ENCODE measurements at regions of chr15 and their contacts with region 1.

Region 1: DNA sequence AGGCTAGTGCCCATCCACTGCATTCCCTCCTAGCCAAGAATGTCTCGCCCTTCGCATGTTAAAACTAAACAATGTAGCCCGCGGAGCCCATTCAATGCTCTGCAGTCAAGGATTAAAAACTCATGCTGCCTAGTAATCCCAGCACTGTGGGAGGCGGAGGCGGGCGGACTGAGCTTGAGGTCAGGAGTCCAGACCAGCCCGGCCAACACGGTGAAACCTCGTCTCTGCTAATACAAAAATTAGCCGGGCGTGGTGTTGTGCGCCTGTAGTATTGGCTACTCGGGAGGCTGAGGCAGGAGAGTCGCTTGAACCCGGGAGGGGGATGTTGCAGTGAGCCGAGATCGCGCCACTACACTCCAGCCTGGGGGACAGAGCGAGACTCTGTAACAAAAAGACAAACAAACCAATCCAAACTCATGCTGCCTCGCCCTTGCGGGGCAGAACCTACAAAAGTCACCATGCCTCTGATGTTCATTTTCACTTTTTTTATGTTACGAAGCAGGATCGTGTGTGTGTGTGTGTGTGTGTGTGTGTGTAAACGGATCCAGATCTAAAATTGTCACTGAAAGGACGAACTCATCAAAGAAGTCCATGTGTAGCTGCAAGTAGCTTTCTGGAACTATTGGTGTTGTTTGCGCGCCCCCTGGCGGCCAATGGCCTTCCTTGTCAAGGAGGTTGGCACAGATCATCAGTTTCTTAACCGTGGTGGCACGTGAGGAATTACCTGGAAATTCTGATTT is 54.8 kb upstream of the SPESP1 start:
- DNase-seq: peak; percentile 56
- H3K4me3 ChIP-seq: peak overlapping the region; percentile 56
- CTCF ChIP-seq: peak; percentile 87

Region 2: GRCh38 chr15:68304589-68305337 is 570.8 kb before region 1 on chr15:
- CTCF ChIA-PET with region 1: interaction called, 11 read pairs
- POLR2A ChIA-PET with region 1: no interaction called
- DNase-seq: no peak
- H3K4me3 ChIP-seq: no peak overlapping the region
- CTCF ChIP-seq: no peak

Region 3: GRCh38 chr15:68559345-68560310 is 315.9 kb before region 1 on chr15:
- CTCF ChIA-PET with region 1: interaction called, 94 read pairs
- POLR2A ChIA-PET with region 1: no interaction called
- DNase-seq: no peak
- H3K4me3 ChIP-seq: peak overlapping the region; percentile 59
- CTCF ChIP-seq: peak; percentile 98

Region 4: DNA sequence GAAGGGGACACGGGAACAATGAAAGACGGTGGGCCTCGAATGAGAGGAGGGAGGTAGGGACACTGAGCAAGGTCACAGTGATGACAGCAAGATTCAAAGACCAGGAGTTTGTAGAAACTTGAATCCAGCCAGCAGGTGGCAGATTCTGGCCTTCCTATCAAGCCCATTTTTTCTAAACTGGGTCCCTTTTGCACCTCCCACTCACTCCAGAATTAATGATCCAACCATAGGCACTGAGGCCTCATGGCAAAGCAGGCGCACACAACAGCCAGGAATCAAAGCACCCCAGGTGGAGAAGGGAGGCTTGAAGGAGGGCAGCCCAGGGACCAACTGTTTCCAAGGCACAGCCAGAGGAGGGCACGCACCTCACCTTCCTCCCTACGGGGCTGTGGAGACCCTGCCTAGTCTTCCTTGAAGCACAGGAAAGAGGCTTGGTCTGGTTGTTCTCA is 145.1 kb before region 1 on chr15:
- CTCF ChIA-PET with region 1: interaction called, 35 read pairs
- POLR2A ChIA-PET with region 1: no interaction called
- DNase-seq: no peak
- H3K4me3 ChIP-seq: no peak overlapping the region
- CTCF ChIP-seq: peak; percentile 44

Region 5: DNA sequence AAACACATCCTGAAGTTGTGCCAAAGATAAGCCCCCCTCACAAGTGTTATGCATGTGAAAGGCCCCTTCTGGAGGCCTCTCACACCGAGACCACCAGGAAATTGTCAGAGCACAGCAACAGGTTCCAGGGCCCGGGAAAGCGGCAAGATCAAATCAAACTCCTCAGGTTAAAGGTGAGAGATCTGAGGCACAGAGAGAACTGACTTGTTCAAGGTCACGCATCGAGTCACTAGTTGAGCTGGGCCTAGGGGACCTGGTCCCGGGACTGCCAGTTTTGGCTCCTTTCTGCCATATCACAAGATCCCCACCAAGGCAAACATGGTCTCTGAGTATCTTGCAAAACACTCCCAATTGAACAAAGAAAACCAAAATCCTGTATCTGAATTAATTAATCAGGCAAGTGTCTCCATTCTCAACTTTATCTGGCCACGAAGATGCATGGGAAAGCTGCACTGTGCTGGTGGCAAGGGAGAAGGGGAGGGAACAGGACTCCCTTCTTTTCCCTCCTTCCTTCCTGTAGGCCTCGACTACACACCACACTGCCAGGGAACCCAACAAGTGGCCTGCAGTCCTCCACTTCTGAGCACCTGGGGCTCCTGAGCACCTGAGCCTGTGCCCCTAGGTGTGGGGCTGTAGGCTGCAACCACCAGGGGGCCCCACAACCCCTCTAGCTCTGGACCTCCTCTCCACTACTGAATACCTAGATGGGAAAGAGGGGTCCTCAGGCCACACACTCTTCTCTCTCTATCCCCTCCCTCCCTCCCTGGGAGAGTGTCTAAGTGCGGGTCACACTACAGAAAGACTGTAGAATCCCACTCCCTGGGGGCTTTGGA is 92.1 kb before region 1 on chr15:
- CTCF ChIA-PET with region 1: interaction called, 33 read pairs
- POLR2A ChIA-PET with region 1: interaction called, 5 read pairs
- DNase-seq: no peak
- H3K4me3 ChIP-seq: no peak overlapping the region
- CTCF ChIP-seq: peak; percentile 66

Region 6: DNA sequence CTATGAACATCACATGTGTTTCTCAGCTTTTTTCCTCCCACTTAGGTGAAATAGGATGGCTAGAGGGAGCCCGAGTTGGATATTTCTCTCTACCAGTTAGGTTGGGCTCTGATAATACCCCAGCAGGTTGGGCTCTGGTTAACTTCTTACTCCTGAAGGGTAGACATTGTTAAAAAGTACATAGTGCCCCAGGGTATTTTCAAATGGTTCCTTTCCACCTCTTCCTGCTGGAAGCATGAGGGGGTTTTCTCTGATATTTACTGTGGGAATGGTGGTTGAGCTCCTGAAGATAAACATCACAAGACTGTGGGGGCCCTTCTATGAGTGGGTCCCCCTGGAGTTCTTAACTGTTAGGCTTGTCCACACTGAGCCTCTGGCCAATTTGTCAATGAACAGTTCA is 18.7 kb after region 1 on chr15:
- CTCF ChIA-PET with region 1: interaction called, 12 read pairs
- POLR2A ChIA-PET with region 1: no interaction called
- DNase-seq: no peak
- H3K4me3 ChIP-seq: no peak overlapping the region
- CTCF ChIP-seq: no peak

Region 7: GRCh38 chr15:68924866-68925560 is 49.5 kb after region 1 on chr15:
- CTCF ChIA-PET with region 1: interaction called, 30 read pairs
- POLR2A ChIA-PET with region 1: no interaction called
- DNase-seq: peak; percentile 10
- H3K4me3 ChIP-seq: no peak overlapping the region
- CTCF ChIP-seq: peak; percentile 88